GM10248 (cell line): ENCODE measurements at regions of chr12 and their contacts with region 1.

Region 1: GRCh38 chr12:6195665-6196535 is 4.3 kb upstream of the CD9 start:
- DNase-seq: peak; percentile 90
- CTCF ChIP-seq: peak; percentile 82

Region 2: DNA sequence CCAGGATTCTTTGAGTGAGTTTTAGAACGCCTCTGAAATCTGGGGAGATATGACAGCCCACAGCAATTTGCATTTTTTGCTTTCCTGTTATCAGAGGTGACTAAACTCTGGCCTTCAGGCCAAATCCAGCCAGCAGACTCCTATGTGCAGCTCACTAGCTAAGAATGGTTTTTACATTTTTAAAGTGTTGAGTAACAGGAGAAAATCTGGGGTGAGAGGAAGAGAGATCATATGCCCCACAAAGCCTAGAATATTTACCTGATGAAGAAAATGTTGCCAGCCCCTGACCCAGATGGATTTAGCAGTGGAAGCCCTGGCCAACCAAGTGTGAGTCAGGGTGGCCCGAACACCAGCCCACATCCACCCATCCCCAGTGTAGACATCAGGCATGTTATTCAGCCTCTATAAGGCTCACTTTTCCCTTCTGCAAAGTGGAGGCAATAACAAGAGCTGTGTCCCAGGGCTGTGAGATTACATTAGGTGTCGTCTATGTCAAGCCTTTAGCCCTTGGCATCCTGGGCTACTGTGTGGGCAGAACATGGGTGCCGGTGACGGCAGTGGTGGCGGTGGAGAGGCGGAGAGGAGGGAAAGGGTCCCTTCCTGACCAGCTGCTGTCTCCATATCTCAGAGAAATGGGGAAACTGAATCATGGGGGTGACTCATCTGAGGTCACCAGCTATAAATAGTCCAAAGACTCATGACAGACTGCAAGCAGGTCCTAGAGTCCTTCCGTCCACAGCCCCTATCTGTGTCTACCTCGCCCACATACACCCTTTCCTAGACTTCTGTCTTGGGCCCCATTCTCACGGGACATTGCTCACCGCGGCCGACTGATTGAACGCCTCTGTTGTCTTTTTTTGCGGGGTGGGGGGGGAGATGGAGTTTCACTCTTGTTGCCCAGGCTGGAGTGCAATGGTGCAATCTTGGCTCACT is 28.3 kb before region 1 on chr12:
- CTCF ChIA-PET with region 1: interaction called, 17 read pairs
- POLR2A ChIA-PET with region 1: no interaction called
- DNase-seq: peak; percentile 82
- CTCF ChIP-seq: no peak

Region 3: DNA sequence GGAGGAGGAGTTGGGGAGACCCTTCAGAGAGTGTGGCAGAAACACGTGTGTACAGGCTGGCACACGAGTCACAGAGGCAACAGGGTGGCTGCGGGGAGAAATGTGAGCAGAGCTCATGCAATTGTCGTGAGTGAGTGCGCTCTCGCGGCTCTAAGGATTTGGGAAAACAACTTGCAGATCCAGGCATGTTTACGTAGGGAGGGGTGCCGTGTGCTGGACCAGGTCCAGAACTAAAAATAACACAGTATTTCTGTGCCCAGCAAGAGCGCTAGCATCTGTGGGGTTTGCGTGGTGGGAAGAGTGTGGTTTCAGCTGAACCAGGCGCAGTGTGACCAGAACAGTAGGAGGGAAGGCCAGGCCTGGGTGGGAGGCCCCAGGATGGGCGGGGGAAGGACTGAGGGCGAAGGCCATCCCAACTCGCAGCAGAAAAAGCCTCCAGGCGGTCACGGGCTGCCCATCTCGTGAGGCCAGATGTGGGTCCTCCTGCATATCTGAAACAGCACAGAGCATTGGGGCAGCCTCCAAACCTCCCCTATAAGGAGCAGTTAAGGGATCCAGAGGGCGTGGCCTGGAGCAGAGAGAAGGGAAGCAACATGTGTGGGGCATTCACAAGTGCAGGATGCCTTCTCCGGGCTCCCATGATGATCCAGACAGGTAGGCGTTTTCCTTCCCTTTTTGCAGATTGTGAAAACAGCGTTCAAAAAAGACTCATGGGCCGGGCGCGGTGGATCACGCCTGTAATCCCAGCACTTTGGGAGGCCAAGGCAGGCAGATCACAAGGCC is 13.6 kb before region 1 on chr12:
- CTCF ChIA-PET with region 1: interaction called, 16 read pairs
- POLR2A ChIA-PET with region 1: no interaction called
- DNase-seq: no peak
- CTCF ChIP-seq: no peak

Region 4: GRCh38 chr12:6215932-6216494 is 20.1 kb after region 1 on chr12:
- CTCF ChIA-PET with region 1: interaction called, 26 read pairs
- POLR2A ChIA-PET with region 1: no interaction called
- DNase-seq: no peak
- CTCF ChIP-seq: no peak

Region 5: DNA sequence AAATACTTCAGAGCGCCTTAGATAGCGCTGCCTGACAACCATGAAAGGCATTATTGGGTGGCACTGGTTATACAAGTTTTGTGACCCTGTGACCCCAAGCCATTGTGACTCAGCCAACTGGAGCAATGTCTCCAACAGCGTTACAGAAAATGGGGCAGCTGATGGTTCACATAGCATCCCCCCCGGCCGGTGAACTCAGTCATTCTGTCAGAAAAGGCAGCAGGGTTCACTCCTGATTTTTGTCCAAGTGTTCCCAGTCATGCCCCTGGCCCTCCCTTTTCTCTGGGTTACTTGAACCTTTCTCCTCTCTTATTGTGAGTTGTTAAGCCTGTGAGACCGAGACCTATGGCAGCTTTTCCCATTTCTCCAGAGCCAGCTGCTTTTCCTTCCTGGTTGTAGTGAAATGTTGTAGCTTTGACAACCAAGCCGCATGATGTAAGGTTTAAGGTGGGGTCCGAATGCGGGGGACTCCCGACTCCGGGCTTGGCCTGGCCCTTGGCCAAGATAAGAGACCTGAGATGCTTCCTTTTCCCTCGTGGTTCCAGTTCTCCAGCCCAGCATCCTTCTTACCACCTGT is 26.3 kb after region 1 on chr12:
- CTCF ChIA-PET with region 1: interaction called, 26 read pairs
- POLR2A ChIA-PET with region 1: no interaction called
- DNase-seq: no peak
- CTCF ChIP-seq: no peak

Region 6: DNA sequence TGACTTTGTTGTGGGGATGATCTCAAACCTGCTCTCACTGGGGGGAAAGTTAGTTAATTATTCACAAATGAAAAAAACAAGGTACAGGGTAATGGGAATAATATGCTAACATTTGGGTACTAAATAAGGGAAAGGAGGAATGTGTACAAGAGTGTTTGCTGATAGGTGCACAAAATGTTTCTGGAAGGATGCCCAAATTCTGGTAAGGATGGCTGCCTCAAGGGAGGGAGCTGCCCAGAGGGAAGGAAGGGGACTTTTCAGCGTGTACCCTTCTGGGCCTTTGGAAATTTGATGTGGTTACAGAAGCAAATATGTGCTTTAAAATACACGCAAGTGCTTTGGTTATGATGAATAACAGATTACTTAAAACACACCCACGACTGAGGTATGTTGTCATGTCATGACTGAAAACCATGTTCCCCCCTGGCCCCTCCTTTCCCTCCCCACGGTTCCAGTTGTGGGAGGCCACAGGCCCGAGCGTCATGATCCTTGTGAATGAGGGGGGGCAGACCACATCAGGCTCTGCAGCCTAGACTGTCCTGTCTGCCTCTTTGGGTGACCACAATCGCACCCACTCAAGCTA is 71.3 kb after region 1 on chr12:
- CTCF ChIA-PET with region 1: interaction called, 126 read pairs
- POLR2A ChIA-PET with region 1: no interaction called
- DNase-seq: peak; percentile 45
- CTCF ChIP-seq: no peak

Region 7: GRCh38 chr12:6285063-6285477 is 89.2 kb after region 1 on chr12:
- CTCF ChIA-PET with region 1: interaction called, 126 read pairs
- POLR2A ChIA-PET with region 1: no interaction called
- DNase-seq: peak; percentile 84
- CTCF ChIP-seq: peak; percentile 80